Caco-2 (cell line): ENCODE measurements at regions of chr14 and their contacts with region 1.

Region 1: GRCh38 chr14:77376771-77377501 is at the starts of genes SAMD15 and TMED8:
- DNase-seq: peak; percentile 83 to 91
- H3K4me3 ChIP-seq: peak within 1 kb of the TSS; percentile 73
- H3K4me3 Mint-ChIP-seq: no peak within 1 kb of the TSS
- H3K27ac Mint-ChIP-seq: no peak within 1 kb of the TSS
- H3K4me1 ChIP-seq: peaks cover 23% of the 10 kb centered on the region
- H3K4me1 Mint-ChIP-seq: peaks cover 32% of the 10 kb centered on the region
- H3K27me3 ChIP-seq: no peaks in the 10 kb centered on the region
- H3K27me3 Mint-ChIP-seq: no peaks in the 10 kb centered on the region
- CTCF ChIP-seq: peak in 1 of 2 experiments; percentile 38
- total RNA-seq, gene SAMD15: 0.82 and 1.5 TPM in 2 replicates
- total RNA-seq, gene TMED8: 13.3 and 14.1 TPM in 2 replicates

Region 2: DNA sequence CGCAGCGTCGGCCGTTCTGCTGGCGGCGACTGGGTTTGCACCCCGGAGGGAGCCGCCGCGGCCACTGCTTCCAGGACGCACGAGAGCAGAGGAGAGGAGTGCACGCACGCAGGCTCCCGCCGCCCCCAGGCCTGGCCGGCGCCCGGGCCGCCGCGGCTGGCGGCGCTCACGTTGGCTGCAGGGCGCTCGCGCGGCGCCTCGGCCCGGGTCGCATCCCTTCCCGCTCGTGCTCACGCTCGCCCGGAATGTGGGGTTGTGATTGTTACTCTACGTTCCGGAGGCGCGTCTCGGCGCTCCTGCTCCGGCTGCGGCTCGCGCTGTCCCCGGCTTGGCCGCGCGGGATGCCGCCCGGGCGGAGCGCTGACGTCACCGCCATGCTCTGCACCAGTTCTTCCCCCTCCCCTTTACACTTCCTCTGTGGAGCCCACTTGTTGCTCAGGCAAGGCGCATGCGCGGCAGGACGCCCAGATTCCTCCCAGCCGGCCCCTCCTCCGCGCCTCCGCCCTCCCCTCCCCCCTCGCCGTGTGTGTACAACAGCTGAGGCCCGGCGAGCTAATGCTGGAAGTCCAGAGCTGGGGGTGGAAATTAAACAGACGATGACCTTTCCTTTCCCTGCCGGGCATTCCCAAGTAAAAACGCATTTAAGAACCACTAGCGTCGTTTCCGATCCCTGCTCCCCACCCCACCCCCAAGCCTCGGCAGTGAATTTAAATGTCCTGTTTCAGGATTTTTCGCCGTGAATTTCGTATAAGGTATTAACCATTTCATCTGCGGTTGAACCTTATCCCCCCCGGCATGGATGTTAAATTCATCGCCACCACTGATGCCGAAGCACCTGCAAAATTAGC is 348.3 kb before region 1 on chr14 and contains the start of gene IRF2BPL:
- CTCF ChIA-PET with region 1: no interaction called
- POLR2A ChIA-PET with region 1: interaction called, 11 read pairs
- intact Hi-C with region 1: no loop called
- DNase-seq: peak; percentile 96 to 99
- H3K4me3 ChIP-seq: peak within 1 kb of the TSS; percentile 90
- H3K4me3 Mint-ChIP-seq: peak within 1 kb of the TSS; percentile 89
- H3K27ac Mint-ChIP-seq: peak within 1 kb of the TSS; percentile 92
- H3K4me1 ChIP-seq: peaks cover 53% of the 10 kb centered on the region
- H3K4me1 Mint-ChIP-seq: peaks cover 27% of the 10 kb centered on the region
- H3K27me3 ChIP-seq: no peaks in the 10 kb centered on the region
- H3K27me3 Mint-ChIP-seq: no peaks in the 10 kb centered on the region
- CTCF ChIP-seq: no peak
- total RNA-seq, gene IRF2BPL: 24.1 and 24.7 TPM in 2 replicates

Region 3: DNA sequence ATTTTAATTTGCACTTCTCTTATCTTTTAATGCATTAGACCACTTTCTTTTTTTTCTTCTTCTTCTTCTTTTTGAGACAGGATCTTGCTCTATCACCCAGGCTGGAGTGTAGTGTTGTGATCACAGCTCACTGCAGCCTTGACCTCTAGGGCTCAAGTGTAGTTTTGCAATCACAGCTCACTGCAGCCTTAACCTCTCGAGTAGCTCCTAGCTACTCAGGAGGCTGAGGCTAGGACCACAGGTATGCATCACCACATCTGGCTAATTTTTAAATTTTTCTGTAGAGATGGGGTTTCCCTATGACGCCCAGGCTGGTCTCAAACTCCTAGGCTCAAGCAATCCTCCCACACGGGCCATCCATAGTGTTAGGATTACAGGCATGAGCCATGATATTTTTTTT is 12.8 kb before region 1 on chr14:
- CTCF ChIA-PET with region 1: no interaction called
- POLR2A ChIA-PET with region 1: no interaction called
- intact Hi-C with region 1: no loop called
- DNase-seq: no peak
- H3K4me3 ChIP-seq: no peak overlapping the region
- H3K4me3 Mint-ChIP-seq: no peak overlapping the region
- H3K27ac Mint-ChIP-seq: no peak overlapping the region
- H3K4me1 ChIP-seq: no peaks in the 10 kb centered on the region
- H3K4me1 Mint-ChIP-seq: no peaks in the 10 kb centered on the region
- H3K27me3 ChIP-seq: no peaks in the 10 kb centered on the region
- H3K27me3 Mint-ChIP-seq: no peaks in the 10 kb centered on the region
- CTCF ChIP-seq: no peak